Activated CD8-positive, alpha-beta T cell treated with anti-CD3 and anti-CD28 coated beads for 36 hours (primary cell): ENCODE measurements at regions of chr11 and their contacts with region 1.

Region 1: DNA sequence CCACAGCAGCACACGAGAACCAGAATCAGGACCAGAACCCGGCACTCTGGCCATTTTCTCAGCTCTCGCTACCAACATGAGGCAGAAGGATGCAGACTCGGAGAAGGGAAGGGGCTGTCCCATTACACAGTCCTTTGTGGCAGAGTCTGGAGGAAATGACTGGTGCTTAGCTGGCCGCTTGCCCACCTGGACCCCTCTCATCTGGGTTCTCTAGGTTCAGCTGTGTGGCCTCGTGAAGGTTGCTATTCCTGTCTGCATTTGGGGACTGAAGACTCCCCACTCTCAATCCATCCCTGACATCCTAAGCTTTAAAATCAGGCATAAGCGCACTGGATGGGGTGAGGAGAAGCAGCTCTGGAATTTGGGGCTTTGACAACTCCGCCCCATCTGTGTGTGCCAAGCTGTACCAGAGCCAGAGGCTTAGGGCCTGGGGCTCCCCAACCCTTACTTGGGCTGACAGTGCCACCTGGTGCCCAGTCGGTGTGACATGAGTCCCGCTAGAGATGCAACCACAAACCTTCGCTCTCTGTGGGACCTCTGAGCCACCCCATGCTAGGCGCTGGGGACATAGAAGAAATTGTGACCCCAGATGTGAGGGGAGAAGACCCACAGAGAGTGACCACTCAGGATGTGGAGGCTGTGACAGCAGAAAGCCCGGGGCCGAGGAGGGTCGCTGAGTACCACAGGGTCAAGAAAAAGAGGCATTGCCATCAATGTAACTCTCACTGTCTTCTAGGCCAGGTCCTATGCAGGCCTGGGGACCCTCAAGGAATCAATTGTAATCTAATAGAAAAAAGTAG is 35.9 kb upstream of the FCHSD2 start:
- DNase-seq: peak; percentile 85
- ATAC-seq: peak; percentile 99
- H3K4me3 Mint-ChIP-seq: no peak overlapping the region
- H3K27ac Mint-ChIP-seq: no peak overlapping the region
- H3K4me1 Mint-ChIP-seq: no peaks in the 10 kb centered on the region
- H3K27me3 Mint-ChIP-seq: no peaks in the 10 kb centered on the region
- CTCF ChIP-seq: peak; percentile 78

Region 2: DNA sequence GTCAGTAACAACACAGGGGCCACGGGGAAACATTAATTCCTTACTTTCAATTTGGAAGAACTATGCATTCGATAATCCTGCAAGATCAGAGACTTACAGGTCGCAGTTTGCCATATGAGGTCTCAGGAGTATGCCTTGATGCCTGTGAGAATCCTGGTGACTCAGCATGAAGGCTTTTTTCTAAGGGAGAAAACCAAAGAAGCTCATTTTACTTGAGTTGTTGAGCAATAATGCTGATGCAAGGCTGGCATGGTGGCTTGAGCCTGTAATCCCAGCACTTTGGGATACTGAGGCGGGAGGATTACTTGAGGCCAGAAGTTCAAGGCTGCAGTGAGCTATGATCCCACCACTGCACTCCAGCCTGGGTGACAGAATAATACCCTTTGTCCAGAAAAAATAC is 337.2 kb before region 1 on chr11:
- CTCF ChIA-PET with region 1: interaction called, 12 read pairs
- POLR2A ChIA-PET with region 1: interaction called, 3 read pairs
- intact Hi-C with region 1: loop called (anchors 10 kb)
- DNase-seq: no peak
- ATAC-seq: no peak
- H3K4me3 Mint-ChIP-seq: no peak overlapping the region
- H3K27ac Mint-ChIP-seq: no peak overlapping the region
- H3K4me1 Mint-ChIP-seq: no peaks in the 10 kb centered on the region
- H3K27me3 Mint-ChIP-seq: no peaks in the 10 kb centered on the region
- CTCF ChIP-seq: no peak

Region 3: GRCh38 chr11:72924568-72925190 is 253.3 kb before region 1 on chr11:
- CTCF ChIA-PET with region 1: interaction called, 68 read pairs
- POLR2A ChIA-PET with region 1: no interaction called
- intact Hi-C with region 1: loop called (anchors 10 kb)
- DNase-seq: no peak
- ATAC-seq: no peak
- H3K4me3 Mint-ChIP-seq: no peak overlapping the region
- H3K27ac Mint-ChIP-seq: no peak overlapping the region
- H3K4me1 Mint-ChIP-seq: peaks cover 4% of the 10 kb centered on the region
- H3K27me3 Mint-ChIP-seq: no peaks in the 10 kb centered on the region
- CTCF ChIP-seq: peak; percentile 71

Region 4: GRCh38 chr11:73157053-73158010 is 20.6 kb before region 1 on chr11:
- CTCF ChIA-PET with region 1: interaction called, 14 read pairs
- POLR2A ChIA-PET with region 1: interaction called, 4 read pairs
- intact Hi-C with region 1: no loop called
- DNase-seq: peak; percentile 16
- ATAC-seq: no peak
- H3K4me3 Mint-ChIP-seq: no peak overlapping the region
- H3K27ac Mint-ChIP-seq: no peak overlapping the region
- H3K4me1 Mint-ChIP-seq: peaks cover 47% of the 10 kb centered on the region
- H3K27me3 Mint-ChIP-seq: no peaks in the 10 kb centered on the region
- CTCF ChIP-seq: no peak

Region 5: GRCh38 chr11:73277467-73277866 is 99.5 kb after region 1 on chr11:
- CTCF ChIA-PET with region 1: no interaction called
- POLR2A ChIA-PET with region 1: no interaction called
- intact Hi-C with region 1: no loop called
- DNase-seq: no peak
- ATAC-seq: no peak
- H3K4me3 Mint-ChIP-seq: no peak overlapping the region
- H3K27ac Mint-ChIP-seq: no peak overlapping the region
- H3K4me1 Mint-ChIP-seq: no peaks in the 10 kb centered on the region
- H3K27me3 Mint-ChIP-seq: peaks cover 3% of the 10 kb centered on the region
- CTCF ChIP-seq: no peak

Region 6: DNA sequence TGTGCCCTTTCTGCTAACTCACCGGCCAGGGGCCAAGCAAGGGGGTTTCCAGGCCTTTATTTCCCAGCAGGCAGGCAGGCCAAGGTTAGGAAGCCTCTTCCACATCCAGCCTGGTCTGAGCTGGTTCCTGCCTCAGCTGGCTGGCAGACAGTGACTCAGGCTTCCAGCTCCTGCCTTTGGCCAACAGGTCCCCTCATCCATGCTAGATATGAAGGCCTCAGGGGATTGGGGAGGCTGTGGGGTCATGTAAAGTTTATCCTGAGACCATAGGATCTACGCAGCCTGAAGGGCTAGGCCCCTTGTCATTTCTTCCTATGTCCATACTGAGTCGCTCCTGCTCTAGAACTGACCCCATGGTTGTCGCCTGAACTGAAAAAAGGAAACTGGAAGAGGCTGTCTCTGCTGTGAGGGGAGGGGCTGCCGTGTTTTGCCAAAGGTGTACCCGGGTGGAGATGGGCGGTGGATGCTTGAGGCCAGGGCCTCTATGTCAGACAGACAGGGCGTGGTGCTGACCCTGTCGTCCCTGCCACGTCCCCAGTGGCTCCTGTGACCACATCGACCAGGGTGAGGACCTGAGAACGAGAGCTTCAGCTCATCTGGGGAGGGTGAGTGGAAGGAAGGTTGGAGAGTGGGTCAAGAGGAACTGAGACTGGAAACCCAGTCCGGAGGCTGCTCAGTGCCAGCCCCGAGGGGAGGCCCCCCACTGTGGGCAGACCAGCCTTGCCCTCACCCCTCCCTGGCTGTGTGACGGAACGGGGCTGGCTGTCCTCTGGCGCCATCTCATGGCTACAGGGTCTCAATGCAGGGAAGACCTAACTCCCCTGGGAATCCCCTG is 111.1 kb after region 1 on chr11:
- CTCF ChIA-PET with region 1: interaction called, 39 read pairs
- POLR2A ChIA-PET with region 1: no interaction called
- intact Hi-C with region 1: loop called (anchors 10 kb)
- DNase-seq: peak; percentile 70
- ATAC-seq: peak; percentile 92
- H3K4me3 Mint-ChIP-seq: no peak overlapping the region
- H3K27ac Mint-ChIP-seq: no peak overlapping the region
- H3K4me1 Mint-ChIP-seq: peaks cover 12% of the 10 kb centered on the region
- H3K27me3 Mint-ChIP-seq: no peaks in the 10 kb centered on the region
- CTCF ChIP-seq: peak; percentile 93